ENCODE measurements at regions of chr2 and their contacts with region 1.

Region 1: DNA sequence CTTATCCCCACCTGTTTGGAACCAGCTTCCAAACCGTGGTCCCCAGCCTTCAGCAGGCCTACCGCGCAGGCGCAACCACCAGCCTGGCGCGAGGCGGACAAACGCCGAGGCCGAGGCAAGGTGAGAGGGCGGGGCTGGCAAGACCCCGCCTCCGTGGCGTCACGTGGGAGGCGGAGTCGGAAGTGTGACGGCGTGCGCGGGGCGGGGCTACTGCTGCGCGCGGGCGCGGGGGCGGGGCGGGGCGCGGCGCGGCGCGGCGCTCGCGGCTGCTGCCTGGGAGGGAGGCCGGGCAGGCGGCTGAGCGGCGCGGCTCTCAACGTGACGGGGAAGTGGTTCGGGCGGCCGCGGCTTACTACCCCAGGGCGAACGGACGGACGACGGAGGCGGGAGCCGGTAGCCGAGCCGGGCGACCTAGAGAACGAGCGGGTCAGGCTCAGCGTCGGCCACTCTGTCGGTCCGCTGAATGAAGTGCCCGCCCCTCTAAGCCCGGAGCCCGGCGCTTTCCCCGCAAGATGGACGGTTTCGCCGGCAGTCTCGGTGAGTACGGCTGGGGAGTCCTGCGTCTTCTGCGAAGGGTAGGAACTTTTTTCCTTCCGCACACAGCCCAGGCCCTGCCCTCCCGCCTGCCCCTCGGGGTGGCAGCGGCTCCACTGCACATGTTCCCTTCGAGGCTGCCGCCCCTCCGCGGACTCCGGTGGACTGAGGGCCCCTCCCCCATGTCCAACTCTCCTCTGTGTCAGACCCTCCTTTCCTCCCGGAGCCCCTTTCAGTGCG is at the start of gene EML4:
- DNase-seq: peak; percentile 89
- H3K4me3 Mint-ChIP-seq: no peak within 1 kb of the TSS
- H3K27ac Mint-ChIP-seq: peak within 1 kb of the TSS; percentile 70
- H3K4me1 Mint-ChIP-seq: peaks cover 24% of the 10 kb centered on the region
- H3K27me3 Mint-ChIP-seq: no peaks in the 10 kb centered on the region
- total RNA-seq, gene EML4: 65.8 to 65.9 TPM

Region 2: GRCh38 chr2:41970988-41971660 is 198.2 kb before region 1 on chr2:
- CTCF ChIA-PET with region 1: no interaction called
- intact Hi-C with region 1: no loop called
- DNase-seq: no peak
- H3K4me3 Mint-ChIP-seq: no peak overlapping the region
- H3K27ac Mint-ChIP-seq: no peak overlapping the region
- H3K4me1 Mint-ChIP-seq: no peaks in the 10 kb centered on the region
- H3K27me3 Mint-ChIP-seq: peaks cover 3% of the 10 kb centered on the region

Region 3: DNA sequence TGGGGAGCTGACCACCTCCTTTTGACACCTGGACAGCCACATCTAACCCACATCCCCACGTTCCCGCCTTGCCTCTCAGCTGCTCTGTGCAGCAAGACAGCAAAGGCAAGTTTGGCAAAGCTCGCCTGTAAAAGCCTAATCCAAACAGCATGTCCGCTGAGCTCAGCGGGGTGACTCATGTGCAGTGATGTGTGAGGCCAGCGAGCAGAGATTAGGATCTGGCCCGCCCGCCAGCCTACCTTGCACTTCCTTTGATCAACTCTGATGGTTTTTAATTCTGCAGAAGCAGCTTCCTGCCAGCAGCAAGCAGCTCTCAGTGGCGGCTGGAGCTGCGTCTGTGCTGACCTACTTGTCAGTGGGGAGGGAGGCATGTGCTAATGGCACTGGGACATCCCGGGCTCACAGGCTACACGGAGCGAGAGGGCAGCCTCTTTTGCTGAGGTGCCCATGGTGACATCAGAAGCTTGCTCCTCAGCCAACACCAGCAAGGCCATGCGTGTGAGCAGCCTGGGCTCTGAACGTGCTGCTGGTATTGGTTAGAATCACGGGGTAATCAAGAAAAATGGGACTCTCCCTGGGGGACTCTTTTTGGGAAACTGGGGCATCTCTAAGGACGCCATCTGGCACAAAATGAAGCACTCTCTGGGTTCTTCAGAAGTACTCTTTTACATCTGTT is 36.2 kb before region 1 on chr2:
- CTCF ChIA-PET with region 1: interaction called, 16 read pairs
- intact Hi-C with region 1: loop called (anchors 1 kb)
- DNase-seq: peak; percentile 91
- H3K4me3 Mint-ChIP-seq: peak overlapping the region; percentile 72
- H3K27ac Mint-ChIP-seq: peak overlapping the region; percentile 89
- H3K4me1 Mint-ChIP-seq: peaks cover 83% of the 10 kb centered on the region
- H3K27me3 Mint-ChIP-seq: no peaks in the 10 kb centered on the region

Region 4: GRCh38 chr2:42150159-42150558 is 19.1 kb before region 1 on chr2:
- CTCF ChIA-PET with region 1: no interaction called
- intact Hi-C with region 1: loop called (anchors 1 kb)
- DNase-seq: no peak
- H3K4me3 Mint-ChIP-seq: no peak overlapping the region
- H3K27ac Mint-ChIP-seq: no peak overlapping the region
- H3K4me1 Mint-ChIP-seq: peaks cover 10% of the 10 kb centered on the region
- H3K27me3 Mint-ChIP-seq: no peaks in the 10 kb centered on the region

Region 5: GRCh38 chr2:42183775-42184174 is 14.5 kb after region 1 on chr2:
- CTCF ChIA-PET with region 1: interaction called, 17 read pairs
- intact Hi-C with region 1: loop called (anchors 1 kb)
- DNase-seq: no peak
- H3K4me3 Mint-ChIP-seq: no peak overlapping the region
- H3K27ac Mint-ChIP-seq: no peak overlapping the region
- H3K4me1 Mint-ChIP-seq: peaks cover 68% of the 10 kb centered on the region
- H3K27me3 Mint-ChIP-seq: no peaks in the 10 kb centered on the region

Region 6: GRCh38 chr2:42238644-42239288 is 69.5 kb after region 1 on chr2:
- CTCF ChIA-PET with region 1: interaction called, 3 read pairs
- intact Hi-C with region 1: loop called (anchors 2 kb)
- DNase-seq: peak; percentile 64
- H3K4me3 Mint-ChIP-seq: no peak overlapping the region
- H3K27ac Mint-ChIP-seq: no peak overlapping the region
- H3K4me1 Mint-ChIP-seq: peaks cover 73% of the 10 kb centered on the region
- H3K27me3 Mint-ChIP-seq: no peaks in the 10 kb centered on the region

Region 7: GRCh38 chr2:42810121-42810970 is 641.1 kb after region 1 on chr2:
- CTCF ChIA-PET with region 1: interaction called, 4 read pairs
- intact Hi-C with region 1: loop called (anchors 1 kb)
- DNase-seq: peak; percentile 96
- H3K4me3 Mint-ChIP-seq: peak overlapping the region; percentile 88
- H3K27ac Mint-ChIP-seq: peak overlapping the region; percentile 93
- H3K4me1 Mint-ChIP-seq: peaks cover 11% of the 10 kb centered on the region
- H3K27me3 Mint-ChIP-seq: no peaks in the 10 kb centered on the region